Heart left ventricle (tissue), 16 donors: ENCODE measurements at regions of chr11 and their contacts with region 1.

Region 1: GRCh38 chr11:75204685-75205563 is 35.6 kb upstream of the TPBGL start:
- DNase-seq: peak; percentile 87 to 94 (median 88)
- ATAC-seq: peak; percentile 90 to 96 (median 95)
- H3K4me3 ChIP-seq: no peak overlapping the region
- H3K27ac ChIP-seq: peak overlapping the region in 1 of 12 donors; percentile 37
- H3K4me1 ChIP-seq: peaks cover 0 to 9% (median under 1%) of the 10 kb centered on the region in 12 donors
- H3K27me3 ChIP-seq: peaks cover 0 to 8% (median 0%) of the 10 kb centered on the region in 9 donors
- CTCF ChIP-seq: peak; percentile 87 to 97 (median 92)
- POLR2A ChIP-seq: no peak

Region 2: DNA sequence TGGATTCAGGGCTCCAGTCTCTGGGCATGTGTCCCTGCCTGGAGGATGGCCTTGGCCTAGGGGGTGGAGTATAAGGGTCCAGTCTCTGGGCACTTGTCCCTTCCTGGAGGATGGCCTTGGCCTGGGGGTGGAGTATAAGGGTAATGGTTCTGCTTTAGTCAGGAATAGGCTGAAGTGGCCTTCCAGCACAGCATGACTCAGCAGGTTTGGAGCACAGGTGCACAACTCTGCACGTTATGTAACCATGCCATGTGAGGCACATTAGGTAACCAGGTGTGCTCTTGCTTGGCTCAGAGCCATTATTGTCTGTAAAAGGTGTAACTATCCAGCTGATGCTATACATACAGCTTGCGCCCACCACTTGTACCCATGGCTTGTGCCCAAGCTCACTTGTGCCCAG is 660.9 kb before region 1 on chr11:
- intact Hi-C with region 1: no loop called
- DNase-seq: no peak
- ATAC-seq: peak in 1 of 4 donors; percentile 33
- H3K4me3 ChIP-seq: no peak overlapping the region
- H3K27ac ChIP-seq: no peak overlapping the region
- H3K4me1 ChIP-seq: no peaks in the 10 kb centered on the region
- H3K27me3 ChIP-seq: peaks cover 0 to 2% (median 0%) of the 10 kb centered on the region in 9 donors
- CTCF ChIP-seq: no peak
- POLR2A ChIP-seq: no peak

Region 3: DNA sequence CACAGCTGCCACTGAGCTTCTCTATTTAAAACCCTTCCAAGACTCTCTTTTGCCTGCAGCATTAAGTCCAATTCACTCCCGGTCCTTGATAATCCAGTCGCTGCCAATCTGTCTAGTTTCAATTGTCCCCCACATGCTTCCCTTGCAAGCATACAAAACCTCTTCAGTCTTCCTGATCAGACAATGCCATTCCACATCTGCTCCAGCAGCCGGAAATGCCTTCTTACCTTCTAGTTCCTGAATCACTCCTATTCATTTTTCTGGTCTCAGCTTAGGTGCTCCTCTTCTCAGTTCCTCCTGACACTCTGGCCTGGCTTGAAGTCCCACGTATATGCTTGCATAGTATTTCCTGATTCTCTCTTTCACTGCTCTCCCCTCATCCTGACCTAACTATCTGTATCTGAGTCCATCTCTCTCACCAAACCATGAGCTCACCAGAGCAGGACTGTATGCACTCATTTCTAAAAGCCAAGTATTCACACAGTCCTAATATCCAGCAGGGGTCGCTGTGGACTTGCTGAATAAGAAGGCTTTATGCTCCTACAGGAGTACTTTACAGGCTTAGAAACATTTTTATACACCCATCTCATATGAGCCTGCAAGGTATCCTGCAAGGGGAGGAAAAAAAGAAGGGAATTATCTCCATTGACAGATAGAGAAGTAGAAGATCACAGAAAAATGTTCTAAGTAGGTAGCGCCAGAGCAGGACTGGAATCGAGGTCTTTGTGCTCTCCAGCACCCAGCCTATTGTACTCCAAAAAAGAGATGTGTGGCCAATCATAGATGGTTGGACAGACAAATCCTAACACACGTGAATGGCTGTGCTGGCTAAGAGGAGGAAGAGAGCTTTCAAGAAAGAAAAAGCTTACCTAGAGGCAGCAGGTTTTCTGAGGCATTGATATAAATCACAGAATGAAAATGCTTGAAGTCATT is 275.2 kb before region 1 on chr11:
- intact Hi-C with region 1: loop called in 1 of 10 experiments (anchors 2 kb)
- DNase-seq: peak in 4 of 5 donors; percentile 52 to 76 (median 61)
- ATAC-seq: peak; percentile 71 to 90 (median 88)
- H3K4me3 ChIP-seq: no peak overlapping the region
- H3K27ac ChIP-seq: no peak overlapping the region
- H3K4me1 ChIP-seq: no peaks in the 10 kb centered on the region
- H3K27me3 ChIP-seq: no peaks in the 10 kb centered on the region
- CTCF ChIP-seq: peak; percentile 70 to 89 (median 82)
- POLR2A ChIP-seq: no peak

Region 4: DNA sequence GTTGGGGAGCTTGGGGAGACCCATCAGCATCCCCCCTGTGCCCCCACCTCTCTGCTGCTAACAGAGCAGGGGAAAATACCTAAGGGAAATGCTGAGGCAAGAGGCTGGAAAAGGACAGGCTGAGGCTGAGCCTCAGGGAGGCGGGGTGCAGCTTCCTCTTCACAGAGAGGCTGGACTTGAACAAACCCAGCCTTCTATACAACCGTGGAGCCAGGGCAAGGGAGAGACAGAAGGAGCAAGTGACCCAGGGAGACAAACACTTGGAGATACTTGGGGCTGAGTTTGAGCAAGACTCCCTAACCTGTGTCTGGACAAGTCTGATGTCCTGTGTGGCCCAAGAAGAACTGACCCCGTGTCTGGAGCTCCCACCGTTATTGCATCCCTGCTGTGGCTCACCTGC is 54.0 kb before region 1 on chr11 and contains the start of gene SLCO2B1:
- intact Hi-C with region 1: loop called in 1 of 10 experiments (anchors 2 kb)
- DNase-seq: peak in 2 of 5 donors; percentile 58 to 70
- ATAC-seq: peak; percentile 21 to 77 (median 54)
- H3K4me3 ChIP-seq: peak within 1 kb of the TSS in 11 of 12 donors; percentile 1 to 66 (median 53)
- H3K27ac ChIP-seq: peak within 1 kb of the TSS in 11 of 12 donors; percentile 23 to 85 (median 51)
- H3K4me1 ChIP-seq: peaks cover 0 to 72% (median 24%) of the 10 kb centered on the region in 12 donors
- H3K27me3 ChIP-seq: no peaks in the 10 kb centered on the region
- CTCF ChIP-seq: no peak
- POLR2A ChIP-seq: peak in 1 of 2 donors; percentile 21
- total RNA-seq, gene SLCO2B1: 8.1 to 167 (median 18.6) TPM

Region 5: DNA sequence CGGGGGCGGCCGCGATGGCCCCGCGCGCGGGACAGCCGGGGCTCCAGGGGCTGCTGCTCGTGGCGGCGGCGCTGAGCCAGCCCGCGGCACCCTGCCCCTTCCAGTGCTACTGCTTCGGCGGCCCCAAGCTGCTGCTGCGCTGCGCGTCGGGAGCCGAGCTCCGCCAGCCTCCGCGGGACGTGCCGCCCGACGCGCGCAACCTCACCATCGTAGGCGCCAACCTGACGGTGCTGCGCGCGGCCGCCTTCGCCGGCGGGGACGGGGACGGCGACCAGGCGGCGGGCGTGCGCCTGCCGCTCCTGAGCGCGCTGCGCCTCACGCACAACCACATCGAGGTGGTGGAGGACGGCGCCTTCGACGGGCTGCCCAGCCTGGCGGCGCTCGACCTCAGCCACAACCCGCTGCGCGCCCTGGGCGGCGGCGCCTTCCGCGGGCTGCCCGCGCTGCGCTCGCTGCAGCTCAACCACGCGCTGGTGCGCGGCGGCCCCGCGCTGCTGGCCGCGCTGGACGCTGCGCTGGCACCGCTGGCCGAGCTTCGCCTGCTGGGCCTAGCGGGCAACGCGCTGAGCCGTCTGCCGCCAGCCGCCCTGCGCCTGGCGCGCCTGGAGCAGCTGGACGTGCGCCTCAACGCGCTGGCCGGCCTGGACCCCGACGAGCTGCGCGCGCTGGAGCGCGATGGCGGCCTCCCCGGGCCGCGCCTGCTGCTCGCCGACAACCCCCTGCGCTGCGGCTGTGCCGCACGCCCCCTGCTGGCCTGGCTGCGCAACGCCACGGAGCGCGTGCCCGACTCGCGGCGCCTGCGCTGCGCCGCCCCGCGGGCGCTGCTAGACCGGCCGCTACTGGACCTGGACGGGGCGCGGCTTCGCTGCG is 36.3 kb after region 1 on chr11:
- intact Hi-C with region 1: loop called in 6 of 10 experiments (anchors 5 kb)
- DNase-seq: peak; percentile 82 to 95 (median 84)
- ATAC-seq: peak; percentile 56 to 97 (median 92)
- H3K4me3 ChIP-seq: peak overlapping the region; percentile 7 to 60 (median 44)
- H3K27ac ChIP-seq: no peak overlapping the region
- H3K4me1 ChIP-seq: peaks cover 0 to 21% (median 5%) of the 10 kb centered on the region in 12 donors
- H3K27me3 ChIP-seq: peaks cover 21 to 59% (median 34%) of the 10 kb centered on the region in 9 donors
- CTCF ChIP-seq: peak; percentile 29 to 99 (median 88)
- POLR2A ChIP-seq: no peak

Region 6: DNA sequence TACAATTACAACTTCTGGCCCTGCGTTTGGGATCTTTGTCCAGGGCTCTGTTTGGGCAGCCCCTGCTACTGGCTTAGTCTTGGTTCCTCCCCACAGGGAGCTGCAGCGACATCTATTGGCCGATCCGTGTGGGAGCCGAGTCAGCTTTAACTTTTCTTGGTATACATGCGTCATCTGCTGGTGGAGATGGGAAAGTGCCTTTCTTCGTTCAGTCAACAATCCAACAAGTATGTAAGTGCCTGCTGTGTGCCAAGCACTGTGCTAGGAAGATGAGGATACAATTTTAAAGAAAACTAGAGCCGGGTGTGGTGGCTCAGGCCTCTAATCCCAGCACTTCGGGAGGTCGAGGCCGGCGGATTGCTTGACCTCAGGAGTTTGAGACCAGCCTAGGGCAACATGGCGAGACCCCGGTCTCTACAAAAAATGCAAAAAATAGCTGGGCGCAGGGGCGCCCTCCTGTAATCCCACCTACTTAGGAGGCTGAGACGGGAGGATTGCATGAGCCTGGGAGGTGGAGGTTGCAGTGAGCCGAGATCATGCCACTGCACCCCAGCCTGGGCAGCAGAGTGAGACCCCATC is 43.9 kb after region 1 on chr11:
- intact Hi-C with region 1: loop called in 8 of 10 experiments (anchors 2 to 5 kb)
- DNase-seq: peak; percentile 84 to 91 (median 87)
- ATAC-seq: peak; percentile 88 to 94 (median 92)
- H3K4me3 ChIP-seq: no peak overlapping the region
- H3K27ac ChIP-seq: no peak overlapping the region
- H3K4me1 ChIP-seq: peaks cover 0 to 3% (median 0%) of the 10 kb centered on the region in 12 donors
- H3K27me3 ChIP-seq: peaks cover 0 to 21% (median 5%) of the 10 kb centered on the region in 9 donors
- CTCF ChIP-seq: peak in 11 of 12 donors; percentile 95 to 100 (median 99)
- POLR2A ChIP-seq: no peak